Activated CD8-positive, alpha-beta T cell treated with anti-CD3 and anti-CD28 coated beads for 36 hours (primary cell): ENCODE measurements at regions of chr6 and their contacts with region 1.

Region 1: GRCh38 chr6:42978839-42979522 is at the start of gene PEX6:
- DNase-seq: peak; percentile 94
- ATAC-seq: peak; percentile 92
- H3K4me3 Mint-ChIP-seq: peak within 1 kb of the TSS; percentile 88
- H3K27ac Mint-ChIP-seq: peak within 1 kb of the TSS; percentile 95
- H3K4me1 Mint-ChIP-seq: peaks cover 45% of the 10 kb centered on the region
- H3K27me3 Mint-ChIP-seq: no peaks in the 10 kb centered on the region
- CTCF ChIP-seq: no peak
- total RNA-seq, gene PEX6: 7.3 to 9.0 TPM

Region 2: DNA sequence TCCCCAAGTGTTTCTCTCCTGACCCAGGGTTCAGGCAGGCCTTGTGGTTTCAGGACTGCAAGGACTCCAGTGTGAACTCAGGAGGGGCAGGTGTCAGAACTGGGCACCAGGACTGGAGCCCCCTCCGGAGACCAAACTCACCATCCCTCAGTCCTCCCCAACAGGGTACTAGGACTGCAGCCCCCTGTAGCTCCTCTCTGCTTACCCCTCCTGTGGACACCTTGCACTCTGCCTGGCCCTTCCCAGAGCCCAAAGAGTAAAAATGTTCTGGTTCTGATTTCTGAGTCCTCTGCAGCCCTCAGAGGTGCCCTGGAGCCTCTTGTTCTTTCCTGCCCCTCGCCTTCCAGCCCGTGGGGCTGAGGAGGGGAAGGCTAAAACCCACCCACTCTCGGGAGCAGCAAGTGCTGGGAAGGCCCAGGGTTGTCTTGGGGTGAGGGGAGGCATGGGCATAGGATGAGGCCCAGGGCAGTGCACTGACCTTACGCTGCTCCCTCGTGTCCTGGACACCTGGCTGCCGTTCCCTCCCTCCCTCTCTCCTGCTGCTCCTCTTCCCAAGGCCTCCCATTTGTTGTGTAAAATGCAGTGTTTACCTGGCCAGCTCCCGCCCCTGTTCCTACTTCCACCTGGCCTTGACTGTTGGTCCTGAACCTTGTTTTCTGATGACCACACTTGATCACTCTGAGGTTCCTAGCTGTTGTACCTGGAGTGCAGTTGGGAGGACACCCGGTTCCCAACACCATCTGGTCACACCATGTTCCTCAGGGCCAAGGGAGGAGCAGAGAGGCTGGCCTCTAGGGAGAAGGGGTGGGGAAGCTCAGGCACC is 39.8 kb before region 1 on chr6:
- CTCF ChIA-PET with region 1: no interaction called
- POLR2A ChIA-PET with region 1: interaction called, 10 read pairs
- intact Hi-C with region 1: no loop called
- DNase-seq: no peak
- ATAC-seq: no peak
- H3K4me3 Mint-ChIP-seq: no peak overlapping the region
- H3K27ac Mint-ChIP-seq: peak overlapping the region; percentile 21
- H3K4me1 Mint-ChIP-seq: peaks cover 18% of the 10 kb centered on the region
- H3K27me3 Mint-ChIP-seq: no peaks in the 10 kb centered on the region
- CTCF ChIP-seq: no peak

Region 3: GRCh38 chr6:42963855-42964605 is 15.0 kb before region 1 on chr6:
- CTCF ChIA-PET with region 1: interaction called, 3 read pairs
- POLR2A ChIA-PET with region 1: interaction called, 21 read pairs
- intact Hi-C with region 1: no loop called
- DNase-seq: peak; percentile 74
- ATAC-seq: peak; percentile 73
- H3K4me3 Mint-ChIP-seq: no peak overlapping the region
- H3K27ac Mint-ChIP-seq: no peak overlapping the region
- H3K4me1 Mint-ChIP-seq: peaks cover 8% of the 10 kb centered on the region
- H3K27me3 Mint-ChIP-seq: no peaks in the 10 kb centered on the region
- CTCF ChIP-seq: peak; percentile 21